ENCODE measurements at regions of chr3 and their contacts with region 1.

Region 1: GRCh38 chr3:98817547-98818041 is 54.5 kb downstream of the ST3GAL6 start:
- DNase-seq: no peak
- H3K4me3 Mint-ChIP-seq: no peak overlapping the region
- H3K27ac Mint-ChIP-seq: no peak overlapping the region
- H3K4me1 Mint-ChIP-seq: peaks cover 23% of the 10 kb centered on the region
- H3K27me3 Mint-ChIP-seq: no peaks in the 10 kb centered on the region
- CTCF ChIP-seq: peak; percentile 32

Region 2: DNA sequence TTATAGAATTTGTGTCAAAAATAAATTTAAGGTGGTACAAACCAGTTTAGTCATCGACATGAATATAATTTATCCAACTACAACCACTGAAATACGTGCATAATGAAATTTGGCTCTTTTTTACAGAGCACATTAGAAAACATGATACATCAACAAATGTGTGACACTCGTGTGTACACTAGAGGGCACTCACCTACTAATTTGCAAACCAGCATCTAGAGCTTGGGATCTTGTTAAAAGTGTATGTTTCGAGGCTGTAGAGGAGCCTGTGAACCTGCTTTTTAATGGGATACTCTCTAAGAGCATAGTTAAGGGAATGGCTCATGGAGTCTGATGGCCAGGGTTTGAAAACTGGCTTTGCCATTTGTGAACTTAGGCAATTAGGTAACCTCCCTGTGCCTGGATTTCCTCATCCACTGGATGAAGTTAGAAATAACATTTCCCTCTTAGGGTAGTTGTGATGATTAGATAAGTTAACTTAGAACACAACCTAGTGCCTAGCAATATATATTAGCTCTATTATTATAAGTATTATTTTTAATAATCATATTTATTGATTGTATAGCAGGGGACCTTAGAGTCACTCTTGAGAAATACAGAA is 215.4 kb before region 1 on chr3:
- CTCF ChIA-PET with region 1: interaction called, 7 read pairs
- intact Hi-C with region 1: loop called (anchors 1 kb)
- DNase-seq: peak; percentile 33
- H3K4me3 Mint-ChIP-seq: no peak overlapping the region
- H3K27ac Mint-ChIP-seq: no peak overlapping the region
- H3K4me1 Mint-ChIP-seq: no peaks in the 10 kb centered on the region
- H3K27me3 Mint-ChIP-seq: no peaks in the 10 kb centered on the region
- CTCF ChIP-seq: peak; percentile 47

Region 3: GRCh38 chr3:98846101-98846500 is 28.5 kb after region 1 on chr3:
- CTCF ChIA-PET with region 1: no interaction called
- intact Hi-C with region 1: no loop called
- DNase-seq: no peak
- H3K4me3 Mint-ChIP-seq: no peak overlapping the region
- H3K27ac Mint-ChIP-seq: peak overlapping the region; percentile 13
- H3K4me1 Mint-ChIP-seq: peaks cover 17% of the 10 kb centered on the region
- H3K27me3 Mint-ChIP-seq: no peaks in the 10 kb centered on the region
- CTCF ChIP-seq: no peak

Region 4: DNA sequence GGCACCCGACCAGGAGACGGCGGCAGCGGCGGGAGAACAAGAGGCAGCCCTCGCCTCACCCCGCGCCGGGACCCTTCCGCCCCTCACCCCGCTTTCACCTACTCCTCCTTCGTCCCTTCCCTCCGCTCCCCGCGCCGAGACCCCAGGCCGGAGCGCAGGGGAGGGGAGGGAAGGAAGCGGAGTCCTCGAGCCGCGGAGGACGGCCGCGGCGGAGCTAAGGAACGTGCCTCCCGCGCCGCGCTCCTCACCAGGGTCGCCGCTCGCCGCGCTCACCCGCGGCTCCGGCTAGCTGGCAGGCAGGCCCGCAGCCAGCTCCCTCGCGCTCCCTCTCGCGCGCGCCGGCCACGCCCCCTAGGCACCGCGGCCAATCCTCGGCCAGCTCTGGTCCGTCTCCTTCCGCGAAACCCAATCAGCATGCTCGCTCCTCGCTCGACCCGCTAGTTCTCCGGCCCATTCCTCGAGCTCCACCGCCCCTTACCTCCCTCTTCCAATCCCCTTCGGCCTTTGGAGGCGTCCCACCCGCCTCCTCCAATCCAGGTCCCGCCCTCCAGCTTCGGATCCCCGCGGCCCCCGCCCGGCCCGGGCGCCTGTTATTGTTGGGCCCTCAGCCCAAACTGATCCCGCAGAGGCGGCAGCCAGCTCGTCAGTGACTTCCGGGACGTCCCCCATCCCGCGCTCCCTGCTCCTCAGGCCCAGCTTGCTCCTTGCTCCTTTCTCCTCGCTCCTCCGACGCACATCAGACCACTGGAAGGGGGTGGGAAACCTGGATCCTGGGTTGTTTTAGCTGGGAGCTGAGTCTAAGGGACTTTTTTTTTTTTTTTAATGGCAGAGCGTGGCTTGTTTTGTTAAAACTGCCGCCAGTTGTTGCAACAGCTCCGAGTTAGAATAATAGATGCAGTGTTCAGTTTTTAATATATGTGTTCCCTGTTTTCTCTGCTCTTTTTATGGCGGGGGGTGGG is 84.1 kb after region 1 on chr3 and contains the start of gene DCBLD2:
- CTCF ChIA-PET with region 1: interaction called, 10 read pairs
- intact Hi-C with region 1: loop called (anchors 5 kb)
- DNase-seq: peak; percentile 97
- H3K4me3 Mint-ChIP-seq: peak within 1 kb of the TSS; percentile 86
- H3K27ac Mint-ChIP-seq: peak within 1 kb of the TSS; percentile 95
- H3K4me1 Mint-ChIP-seq: peaks cover 28% of the 10 kb centered on the region
- H3K27me3 Mint-ChIP-seq: no peaks in the 10 kb centered on the region
- CTCF ChIP-seq: no peak
- total RNA-seq, gene DCBLD2: 115 and 178 TPM in 2 replicates

Region 5: DNA sequence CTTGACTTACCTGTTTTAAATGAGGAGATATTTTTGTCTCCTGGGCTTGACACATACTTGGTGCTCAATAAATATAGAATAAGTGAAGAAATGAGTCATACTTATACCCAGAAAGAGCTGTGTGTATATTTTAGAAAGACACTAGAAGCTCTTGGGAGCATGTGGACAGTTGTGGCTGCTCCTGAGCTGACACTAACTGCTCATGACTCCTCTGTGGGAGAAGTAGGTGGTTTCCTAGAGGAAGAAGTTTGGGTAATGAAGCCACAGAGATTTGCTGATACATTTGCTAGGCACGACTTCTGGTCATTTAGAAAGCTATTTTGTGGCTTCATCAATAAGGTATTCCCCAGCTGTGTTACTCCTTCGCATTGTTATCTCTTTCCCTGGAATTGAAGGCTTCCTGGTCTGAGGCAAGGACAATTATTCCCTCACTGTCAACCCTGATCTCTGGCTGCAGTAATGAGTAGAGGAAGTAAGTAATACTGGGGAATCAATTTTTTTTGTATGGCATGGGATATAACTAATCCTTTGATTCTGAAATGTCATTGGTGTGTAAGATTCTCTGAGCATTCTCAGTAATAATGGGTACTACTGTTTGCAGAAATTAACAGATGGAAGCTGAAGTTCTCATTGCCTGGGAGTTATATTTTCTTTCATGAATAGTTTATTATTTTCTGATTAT is 163.5 kb after region 1 on chr3:
- CTCF ChIA-PET with region 1: interaction called, 13 read pairs
- intact Hi-C with region 1: loop called (anchors 1 kb)
- DNase-seq: no peak
- H3K4me3 Mint-ChIP-seq: peak overlapping the region; percentile 30
- H3K27ac Mint-ChIP-seq: peak overlapping the region; percentile 54
- H3K4me1 Mint-ChIP-seq: peaks cover 60% of the 10 kb centered on the region
- H3K27me3 Mint-ChIP-seq: no peaks in the 10 kb centered on the region
- CTCF ChIP-seq: no peak

Region 6: GRCh38 chr3:98994128-98994762 is 176.7 kb after region 1 on chr3:
- CTCF ChIA-PET with region 1: interaction called, 23 read pairs
- intact Hi-C with region 1: loop called (anchors 1 kb)
- DNase-seq: no peak
- H3K4me3 Mint-ChIP-seq: no peak overlapping the region
- H3K27ac Mint-ChIP-seq: no peak overlapping the region
- H3K4me1 Mint-ChIP-seq: peaks cover 19% of the 10 kb centered on the region
- H3K27me3 Mint-ChIP-seq: peaks cover 13% of the 10 kb centered on the region
- CTCF ChIP-seq: peak; percentile 31

Measured in Calu3 (cell line).